H1 (cell line): ENCODE measurements at regions of chr15 and their contacts with region 1.

Region 1: DNA sequence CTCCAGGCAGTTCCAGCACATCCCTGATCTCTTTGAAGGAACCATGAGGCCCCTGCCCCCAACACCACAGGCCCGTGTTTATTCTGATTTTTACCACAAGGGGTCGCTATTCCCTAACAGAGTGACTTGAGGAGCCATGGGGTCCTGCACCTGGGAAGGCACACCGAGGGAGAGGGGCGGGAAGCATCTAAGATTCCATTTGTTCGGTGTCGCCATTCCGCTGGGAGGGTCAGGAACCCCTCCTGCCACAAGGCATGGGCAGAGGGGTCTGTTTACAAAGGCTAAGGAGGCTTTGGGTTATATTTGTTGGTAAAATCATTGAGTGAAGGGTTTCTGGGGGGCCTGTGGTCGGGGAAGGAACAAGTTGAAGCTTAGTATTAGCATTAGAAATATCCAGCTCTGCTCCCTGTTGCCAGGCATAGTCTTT is 77.1 kb downstream of the WDR76 start:
- DNase-seq: peak; percentile 70 to 94
- H3K4me3 ChIP-seq: no peak overlapping the region; a peak in 1 of 8 replicates
- H3K27ac ChIP-seq: no peak overlapping the region
- H3K4me1 ChIP-seq: peaks cover 0 to 5% (median 2%) of the 10 kb centered on the region in 4 experiments; a peak in 3 of 7 replicates
- H3K27me3 ChIP-seq: no peaks in the 10 kb centered on the region
- CTCF ChIP-seq: peak; percentile 69 to 94 (median 84)
- EP300 ChIP-seq: 0 out of 3 replicates have a peak, but pooled peaks of 1 of the 2 experiments have one; percentile 67
- POLR2A ChIP-seq: no peak
- RAD21 ChIP-seq: peak; percentile 99

Region 2: GRCh38 chr15:43749690-43750345 is 154.1 kb before region 1 on chr15:
- CTCF ChIA-PET with region 1: no interaction called
- POLR2A ChIA-PET with region 1: no interaction called
- DNase-seq: no peak
- H3K4me3 ChIP-seq: no peak overlapping the region
- H3K27ac ChIP-seq: no peak overlapping the region
- H3K4me1 ChIP-seq: peaks cover 0 to 6% (median 2%) of the 10 kb centered on the region in 4 experiments; a peak in 6 of 7 replicates
- H3K27me3 ChIP-seq: no peaks in the 10 kb centered on the region
- CTCF ChIP-seq: no peak
- EP300 ChIP-seq: no peak
- POLR2A ChIP-seq: no peak
- RAD21 ChIP-seq: no peak

Region 3: GRCh38 chr15:43881944-43882343 is 21.9 kb before region 1 on chr15:
- CTCF ChIA-PET with region 1: interaction called, 27 read pairs
- POLR2A ChIA-PET with region 1: no interaction called
- DNase-seq: peak in 1 of 2 experiments; percentile 67
- H3K4me3 ChIP-seq: no peak overlapping the region
- H3K27ac ChIP-seq: no peak overlapping the region
- H3K4me1 ChIP-seq: peaks cover 0 to 13% (median 5%) of the 10 kb centered on the region in 4 experiments; a peak in 3 of 7 replicates
- H3K27me3 ChIP-seq: no peaks in the 10 kb centered on the region
- CTCF ChIP-seq: peak; percentile 79 to 90 (median 88)
- EP300 ChIP-seq: no peak
- POLR2A ChIP-seq: 0 out of 3 replicates have a peak, but pooled peaks of 1 of the 2 experiments have one; percentile 17
- RAD21 ChIP-seq: peak; percentile 55 to 62

Region 4: DNA sequence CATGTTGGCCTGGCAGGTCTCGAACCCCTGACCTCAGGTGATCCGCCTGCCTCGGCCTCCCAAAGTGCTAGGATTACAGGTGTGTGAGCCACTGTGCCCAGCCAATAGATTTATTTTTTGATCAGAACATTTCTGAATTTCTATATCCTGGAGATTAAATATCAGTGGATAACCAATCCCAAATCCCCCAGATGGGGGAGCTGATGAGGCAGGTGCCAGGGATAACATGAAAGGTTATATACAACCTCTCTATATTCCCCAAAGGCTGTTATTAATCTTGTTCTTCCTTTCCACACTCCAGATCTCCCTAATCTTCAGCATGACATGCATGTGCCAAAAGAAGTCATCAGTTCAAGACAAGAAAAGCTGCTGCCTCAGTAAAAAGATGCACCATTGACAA is 35.2 kb after region 1 on chr15:
- CTCF ChIA-PET with region 1: interaction called, 62 read pairs
- POLR2A ChIA-PET with region 1: no interaction called
- DNase-seq: peak in 1 of 2 experiments; percentile 55
- H3K4me3 ChIP-seq: no peak overlapping the region
- H3K27ac ChIP-seq: no peak overlapping the region
- H3K4me1 ChIP-seq: no peaks in the 10 kb centered on the region
- H3K27me3 ChIP-seq: no peaks in the 10 kb centered on the region; a peak in 1 of 7 replicates
- CTCF ChIP-seq: peak in 2 of 3 experiments; percentile 48 to 55; a peak in 3 of 4 replicates
- EP300 ChIP-seq: no peak
- POLR2A ChIP-seq: no peak
- RAD21 ChIP-seq: peak; percentile 44 to 59

Region 5: DNA sequence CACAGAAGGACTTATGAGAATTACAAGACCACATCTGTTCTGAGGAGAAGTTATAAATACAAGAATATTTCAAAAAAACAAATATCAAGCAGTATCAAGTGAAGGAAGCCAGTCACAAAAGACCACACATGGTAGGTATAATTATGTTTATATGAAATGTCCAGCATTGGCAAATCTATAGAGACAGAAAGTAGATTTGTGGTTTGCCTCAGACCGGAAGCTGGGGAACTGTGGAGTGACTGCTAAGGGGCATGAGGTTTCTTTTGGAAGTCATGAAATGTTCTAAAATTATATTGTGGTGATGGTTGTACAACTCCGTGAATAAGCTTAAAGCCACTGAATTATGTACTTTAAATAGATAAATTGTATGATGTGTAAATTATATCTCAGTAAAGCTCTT is 154.2 kb after region 1 on chr15:
- CTCF ChIA-PET with region 1: interaction called, 39 read pairs
- POLR2A ChIA-PET with region 1: no interaction called
- DNase-seq: no peak
- H3K4me3 ChIP-seq: no peak overlapping the region
- H3K27ac ChIP-seq: no peak overlapping the region
- H3K4me1 ChIP-seq: peaks cover 0 to 3% (median 1%) of the 10 kb centered on the region in 4 experiments; a peak in 1 of 7 replicates
- H3K27me3 ChIP-seq: no peaks in the 10 kb centered on the region
- CTCF ChIP-seq: no peak
- EP300 ChIP-seq: no peak
- POLR2A ChIP-seq: no peak
- RAD21 ChIP-seq: no peak

Region 6: DNA sequence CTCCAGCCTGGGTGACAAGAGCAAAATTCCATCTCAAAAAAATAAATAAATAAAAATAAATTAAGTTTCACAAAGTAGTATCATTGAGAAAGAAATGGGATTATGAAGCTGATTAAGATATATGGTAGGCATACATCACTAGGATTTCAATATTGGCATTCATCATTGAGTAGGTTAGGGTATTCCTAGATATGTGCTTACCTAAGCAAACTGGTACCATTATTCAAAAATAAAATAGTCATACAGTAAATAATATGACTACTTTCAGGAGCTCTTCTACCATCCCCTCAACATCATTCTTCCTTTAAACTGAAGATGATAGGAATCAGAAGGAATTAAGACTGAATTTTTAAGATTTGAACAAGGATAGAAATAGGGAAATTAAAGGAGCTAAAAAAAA is 224.6 kb after region 1 on chr15:
- CTCF ChIA-PET with region 1: interaction called, 13 read pairs
- POLR2A ChIA-PET with region 1: no interaction called
- DNase-seq: no peak
- H3K4me3 ChIP-seq: no peak overlapping the region
- H3K27ac ChIP-seq: no peak overlapping the region
- H3K4me1 ChIP-seq: no peaks in the 10 kb centered on the region
- H3K27me3 ChIP-seq: no peaks in the 10 kb centered on the region
- CTCF ChIP-seq: no peak
- EP300 ChIP-seq: no peak
- POLR2A ChIP-seq: no peak
- RAD21 ChIP-seq: no peak